GM10248 (cell line): ENCODE measurements at regions of chr11 and their contacts with region 1.

Region 1: DNA sequence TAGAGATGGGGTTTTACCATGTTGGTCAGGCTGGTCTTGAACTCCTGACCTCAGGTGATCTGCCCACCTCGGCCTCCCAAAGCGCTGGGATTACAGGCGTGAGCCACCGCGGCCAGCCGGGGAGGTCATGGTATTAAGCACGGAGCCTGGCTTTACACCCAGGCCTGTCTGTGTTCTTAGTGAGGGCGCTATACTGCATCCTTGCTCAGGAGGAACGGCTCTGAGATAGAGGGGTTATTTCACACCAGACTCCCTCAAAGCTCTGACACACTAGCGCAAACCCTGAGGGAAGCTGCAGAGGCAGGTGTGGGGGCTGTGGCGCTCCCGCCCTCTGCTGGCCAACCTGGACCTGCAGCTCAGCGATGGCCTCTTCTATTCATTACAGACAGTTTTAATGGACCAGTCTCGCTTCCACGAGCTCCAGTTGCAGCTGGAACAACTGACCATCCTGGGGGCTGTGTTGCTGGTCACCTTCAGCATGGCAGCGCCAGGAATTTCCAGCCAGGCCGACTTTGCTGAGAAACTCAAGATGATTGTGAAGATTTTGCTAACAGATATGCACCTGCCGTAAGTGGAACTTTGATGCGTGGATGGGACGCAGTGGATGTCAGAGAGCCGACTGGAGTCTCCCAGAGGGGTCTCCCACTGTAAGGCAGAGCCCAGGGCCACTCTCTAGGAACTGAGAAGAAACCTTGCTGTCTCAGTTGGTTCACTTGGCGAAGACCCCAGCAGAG is 26.2 kb downstream of the TCP11L1 start:
- DNase-seq: peak; percentile 60
- CTCF ChIP-seq: peak; percentile 98

Region 2: DNA sequence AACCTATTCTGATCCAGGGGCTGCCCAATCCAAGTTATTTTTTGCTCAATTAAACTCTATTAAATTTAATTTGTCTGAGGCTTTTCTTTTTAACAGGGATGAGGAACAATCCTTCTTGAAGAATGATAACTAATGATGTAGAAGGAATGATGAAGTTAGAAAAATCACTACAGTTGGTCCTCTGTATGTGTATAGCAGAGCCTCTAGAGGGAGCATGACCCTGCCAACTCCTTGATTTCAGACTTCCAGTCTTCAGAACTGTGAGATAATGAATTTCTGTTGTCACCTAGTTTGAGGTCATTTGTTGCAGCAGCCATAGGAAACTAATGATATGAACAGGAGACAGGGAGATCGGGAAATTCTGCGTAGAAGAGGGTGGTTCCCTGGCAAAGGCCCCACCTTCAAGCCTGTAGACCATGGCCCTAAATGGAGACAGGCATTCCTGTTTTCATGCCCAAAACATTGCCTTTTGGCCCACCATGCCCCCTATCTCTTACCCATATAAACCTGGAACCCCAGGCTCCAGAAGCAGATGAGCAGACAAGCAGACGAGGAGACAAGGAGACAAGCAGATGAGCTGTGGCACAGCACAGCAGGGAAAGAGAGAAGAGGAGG is 180.7 kb before region 1 on chr11:
- CTCF ChIA-PET with region 1: interaction called, 11 read pairs
- POLR2A ChIA-PET with region 1: no interaction called
- DNase-seq: no peak
- CTCF ChIP-seq: peak; percentile 49

Region 3: DNA sequence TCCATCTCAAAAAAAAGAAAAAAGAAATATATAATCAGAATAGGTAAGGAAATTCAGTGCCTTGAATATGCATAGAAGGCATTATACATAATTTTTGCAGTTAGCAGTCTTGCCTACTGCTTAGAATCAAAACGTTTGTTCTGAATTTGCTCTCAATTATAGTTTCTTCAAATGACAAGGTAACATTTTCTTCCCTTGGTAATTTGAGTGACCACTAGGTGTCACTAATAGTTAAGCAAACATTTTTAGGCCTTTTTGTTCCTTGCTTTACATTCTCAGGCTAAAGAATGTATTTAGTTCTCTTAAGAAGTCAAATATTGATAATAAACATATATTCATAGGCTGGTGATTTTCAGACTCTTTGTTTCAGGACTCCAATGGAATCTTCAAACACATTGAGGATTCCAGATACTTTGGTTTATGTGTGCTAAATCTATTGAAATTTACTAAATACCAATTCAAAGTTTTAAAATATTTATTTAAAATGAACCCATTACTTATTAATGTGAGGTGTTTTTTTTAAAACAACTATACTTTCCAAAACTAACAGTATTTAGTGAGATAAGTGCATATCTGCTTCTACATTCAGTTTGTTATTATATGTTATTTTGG is 105.0 kb before region 1 on chr11:
- CTCF ChIA-PET with region 1: interaction called, 155 read pairs
- POLR2A ChIA-PET with region 1: no interaction called
- DNase-seq: peak; percentile 43
- CTCF ChIP-seq: peak; percentile 63

Region 4: DNA sequence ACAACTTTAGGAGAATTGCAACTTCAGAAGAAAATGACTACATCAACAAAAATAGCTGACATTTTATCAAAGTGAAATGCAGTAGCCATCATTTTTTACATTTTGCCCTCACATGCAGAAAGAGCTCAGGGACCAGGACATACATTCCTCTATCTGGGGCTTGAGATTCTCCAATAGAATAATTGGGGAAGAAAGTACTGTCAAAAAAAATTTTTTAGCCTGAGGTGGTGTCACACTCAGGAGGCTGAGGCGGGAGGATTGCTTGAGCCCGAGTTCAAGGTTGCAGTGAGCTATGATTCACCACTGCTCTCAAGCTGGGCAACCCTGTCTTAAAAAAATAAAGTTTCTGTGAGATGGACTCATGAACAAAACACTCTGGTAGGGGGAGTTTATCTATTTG is 82.1 kb before region 1 on chr11:
- CTCF ChIA-PET with region 1: interaction called, 15 read pairs
- POLR2A ChIA-PET with region 1: no interaction called
- DNase-seq: no peak
- CTCF ChIP-seq: no peak

Region 5: GRCh38 chr11:33052231-33052630 is 13.4 kb before region 1 on chr11:
- CTCF ChIA-PET with region 1: interaction called, 44 read pairs
- POLR2A ChIA-PET with region 1: no interaction called
- DNase-seq: no peak
- CTCF ChIP-seq: no peak

Region 6: GRCh38 chr11:33197915-33198727 is 132.5 kb after region 1 on chr11:
- CTCF ChIA-PET with region 1: no interaction called
- POLR2A ChIA-PET with region 1: no interaction called
- DNase-seq: no peak
- CTCF ChIP-seq: no peak